ENCODE measurements at regions of chr2 and their contacts with region 1.

Region 1: GRCh38 chr2:232142049-232142448 is 180.5 kb downstream of the DIS3L2 start:
- DNase-seq: peak; percentile 20 to 44 (median 30)
- ATAC-seq: peak; percentile 84
- H3K4me3 ChIP-seq: no peak overlapping the region
- H3K27ac ChIP-seq: no peak overlapping the region
- H3K4me1 ChIP-seq: no peaks in the 10 kb centered on the region; a peak in 1 of 5 replicates
- H3K27me3 ChIP-seq: no peaks in the 10 kb centered on the region
- CTCF ChIP-seq: peak; percentile 63 to 73 (median 64)
- EP300 ChIP-seq: no peak
- POLR2A ChIP-seq: no peak
- RAD21 ChIP-seq: peak; percentile 78 to 81

Region 2: GRCh38 chr2:231706731-231707624 is 435.1 kb before region 1 on chr2:
- CTCF ChIA-PET with region 1: no interaction called
- POLR2A ChIA-PET with region 1: no interaction called
- in situ Hi-C with region 1: no loop called
- intact Hi-C with region 1: no loop called
- DNase-seq: peak; percentile 80 to 96 (median 87)
- ATAC-seq: peak; percentile 61
- H3K4me3 ChIP-seq: peak overlapping the region; percentile 60
- H3K27ac ChIP-seq: peak overlapping the region; percentile 97
- H3K4me1 ChIP-seq: peaks cover 13 to 52% of the 10 kb centered on the region in 2 experiments; a peak in 4 of 5 replicates
- H3K27me3 ChIP-seq: no peaks in the 10 kb centered on the region
- CTCF ChIP-seq: peak; percentile 57 to 80 (median 70)
- EP300 ChIP-seq: no peak
- POLR2A ChIP-seq: peak; percentile 70
- RAD21 ChIP-seq: no peak

Region 3: GRCh38 chr2:231925303-231926179 is 216.5 kb before region 1 on chr2:
- CTCF ChIA-PET with region 1: interaction called, 30 read pairs
- POLR2A ChIA-PET with region 1: no interaction called
- in situ Hi-C with region 1: no loop called
- intact Hi-C with region 1: loop called (anchors 5 kb)
- DNase-seq: peak; percentile 77 to 84 (median 82)
- ATAC-seq: peak; percentile 94
- H3K4me3 ChIP-seq: peak overlapping the region; percentile 34
- H3K27ac ChIP-seq: no peak overlapping the region
- H3K4me1 ChIP-seq: peaks cover 0 to 30% of the 10 kb centered on the region in 2 experiments; a peak in 3 of 5 replicates
- H3K27me3 ChIP-seq: peaks cover 30 to 58% of the 10 kb centered on the region in 2 experiments
- CTCF ChIP-seq: peak; percentile 67 to 85 (median 69)
- EP300 ChIP-seq: no peak
- POLR2A ChIP-seq: no peak
- RAD21 ChIP-seq: peak; percentile 68 to 77